Activated CD8-positive, alpha-beta memory T cell treated with anti-CD3 and anti-CD28 coated beads, Interleukin-2, amount 10 ng/mL, durations not matched to agents 7 days and 5 days (primary cell): ENCODE measurements at regions of chr1 and their contacts with region 1.

Region 1: GRCh38 chr1:25037174-25038074 is 107.3 kb upstream of the RUNX3 start:
- DNase-seq: peak; percentile 80
- ATAC-seq: peak; percentile 35
- H3K4me3 Mint-ChIP-seq: no peak overlapping the region
- H3K27ac Mint-ChIP-seq: peak overlapping the region; percentile 35
- H3K4me1 Mint-ChIP-seq: peaks cover 28% of the 10 kb centered on the region
- H3K27me3 Mint-ChIP-seq: peaks cover 11% of the 10 kb centered on the region

Region 2: DNA sequence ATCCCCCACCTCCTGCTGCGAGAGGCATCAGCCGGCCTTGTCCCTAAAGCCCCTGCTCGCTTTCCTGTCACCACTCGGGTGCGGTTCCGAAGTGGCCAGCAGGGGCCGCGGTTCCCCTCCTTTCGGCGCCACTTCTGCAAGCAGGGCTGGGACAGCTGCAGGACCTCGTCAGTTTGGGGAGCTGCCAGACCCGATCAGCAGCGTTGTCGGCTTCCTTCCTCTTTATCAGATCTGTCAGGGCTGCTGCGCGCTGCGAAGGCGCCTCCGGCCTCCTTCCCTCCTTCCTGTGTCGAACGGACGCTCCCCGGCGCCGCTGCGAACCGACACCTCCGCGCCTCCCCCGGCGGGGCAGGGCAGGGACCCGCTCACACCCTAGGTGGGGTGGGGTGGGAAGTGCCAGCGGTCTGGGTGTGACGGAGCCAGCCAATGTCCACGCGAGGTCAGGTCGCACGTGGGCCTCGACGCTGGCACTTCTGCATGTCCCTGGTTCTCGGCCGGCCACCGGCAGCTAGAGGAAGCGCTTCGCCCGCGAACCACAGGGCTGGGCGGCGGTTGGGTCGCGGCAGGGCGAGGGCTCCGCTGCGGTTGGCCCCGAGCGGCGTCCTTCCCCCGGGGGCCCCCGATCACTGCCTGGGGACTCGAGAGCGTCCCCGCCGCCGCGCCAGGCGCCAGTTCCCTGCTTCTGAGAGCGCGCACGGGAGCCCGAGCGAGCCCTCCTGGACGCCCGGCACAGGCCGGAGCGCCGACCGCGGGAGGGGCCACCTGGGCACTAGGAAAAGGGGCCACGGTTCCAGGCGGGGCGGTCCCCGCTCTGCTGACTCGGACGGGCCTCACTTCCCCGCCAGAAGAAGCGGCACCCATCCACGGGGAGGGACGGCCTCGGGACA is 189.2 kb before region 1 on chr1:
- CTCF ChIA-PET with region 1: interaction called, 39 read pairs
- DNase-seq: peak; percentile 96
- ATAC-seq: peak; percentile 98
- H3K4me3 Mint-ChIP-seq: peak overlapping the region; percentile 54
- H3K27ac Mint-ChIP-seq: peak overlapping the region; percentile 66
- H3K4me1 Mint-ChIP-seq: peaks cover 24% of the 10 kb centered on the region
- H3K27me3 Mint-ChIP-seq: peaks cover 56% of the 10 kb centered on the region

Region 3: DNA sequence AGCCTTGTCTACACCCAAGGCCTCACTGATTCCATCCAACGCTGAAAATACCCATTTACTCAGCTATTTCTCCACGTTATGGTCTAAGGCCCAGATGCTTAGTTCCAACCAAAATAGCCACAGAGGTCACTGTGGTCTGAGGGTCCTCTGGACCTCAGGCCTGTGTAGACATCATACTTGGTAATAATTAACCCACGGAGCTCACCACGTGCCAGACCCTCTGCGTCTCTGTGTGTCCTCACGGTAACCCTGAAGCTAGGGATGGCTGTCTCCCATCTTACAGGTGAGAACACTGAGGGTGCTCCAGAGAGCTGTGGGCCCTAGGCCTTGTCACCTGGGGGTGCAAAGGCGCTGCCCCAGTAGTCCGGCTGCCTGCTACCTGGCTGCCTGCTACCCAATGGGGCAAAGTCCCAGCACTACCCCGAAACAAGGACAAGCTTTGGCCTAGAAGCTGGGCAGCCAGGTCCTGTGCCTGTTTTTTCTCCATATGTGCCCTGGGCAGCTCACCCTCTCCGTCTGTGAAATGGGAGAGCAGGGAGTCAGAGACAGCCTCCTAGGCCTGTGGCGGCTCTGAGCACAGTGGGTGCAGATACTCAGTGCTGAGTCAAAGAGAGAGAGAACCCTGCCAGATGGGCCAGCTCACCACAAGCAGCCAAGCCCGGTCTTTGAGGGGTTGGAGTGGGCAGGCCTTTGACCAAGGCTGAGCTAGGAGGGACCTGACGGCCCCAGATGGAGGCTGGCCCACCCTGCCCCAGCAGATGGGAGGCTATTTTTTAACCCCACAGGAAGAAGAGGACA is 90.4 kb before region 1 on chr1:
- CTCF ChIA-PET with region 1: interaction called, 338 read pairs
- DNase-seq: peak; percentile 78
- ATAC-seq: peak; percentile 62
- H3K4me3 Mint-ChIP-seq: peak overlapping the region; percentile 31
- H3K27ac Mint-ChIP-seq: peak overlapping the region; percentile 61
- H3K4me1 Mint-ChIP-seq: peaks cover 92% of the 10 kb centered on the region
- H3K27me3 Mint-ChIP-seq: no peaks in the 10 kb centered on the region

Region 4: GRCh38 chr1:24981631-24982005 is 55.8 kb before region 1 on chr1:
- CTCF ChIA-PET with region 1: interaction called, 21 read pairs
- DNase-seq: no peak
- ATAC-seq: peak; percentile 21
- H3K4me3 Mint-ChIP-seq: peak overlapping the region; percentile 8
- H3K27ac Mint-ChIP-seq: peak overlapping the region; percentile 71
- H3K4me1 Mint-ChIP-seq: peaks cover 86% of the 10 kb centered on the region
- H3K27me3 Mint-ChIP-seq: no peaks in the 10 kb centered on the region

Region 5: DNA sequence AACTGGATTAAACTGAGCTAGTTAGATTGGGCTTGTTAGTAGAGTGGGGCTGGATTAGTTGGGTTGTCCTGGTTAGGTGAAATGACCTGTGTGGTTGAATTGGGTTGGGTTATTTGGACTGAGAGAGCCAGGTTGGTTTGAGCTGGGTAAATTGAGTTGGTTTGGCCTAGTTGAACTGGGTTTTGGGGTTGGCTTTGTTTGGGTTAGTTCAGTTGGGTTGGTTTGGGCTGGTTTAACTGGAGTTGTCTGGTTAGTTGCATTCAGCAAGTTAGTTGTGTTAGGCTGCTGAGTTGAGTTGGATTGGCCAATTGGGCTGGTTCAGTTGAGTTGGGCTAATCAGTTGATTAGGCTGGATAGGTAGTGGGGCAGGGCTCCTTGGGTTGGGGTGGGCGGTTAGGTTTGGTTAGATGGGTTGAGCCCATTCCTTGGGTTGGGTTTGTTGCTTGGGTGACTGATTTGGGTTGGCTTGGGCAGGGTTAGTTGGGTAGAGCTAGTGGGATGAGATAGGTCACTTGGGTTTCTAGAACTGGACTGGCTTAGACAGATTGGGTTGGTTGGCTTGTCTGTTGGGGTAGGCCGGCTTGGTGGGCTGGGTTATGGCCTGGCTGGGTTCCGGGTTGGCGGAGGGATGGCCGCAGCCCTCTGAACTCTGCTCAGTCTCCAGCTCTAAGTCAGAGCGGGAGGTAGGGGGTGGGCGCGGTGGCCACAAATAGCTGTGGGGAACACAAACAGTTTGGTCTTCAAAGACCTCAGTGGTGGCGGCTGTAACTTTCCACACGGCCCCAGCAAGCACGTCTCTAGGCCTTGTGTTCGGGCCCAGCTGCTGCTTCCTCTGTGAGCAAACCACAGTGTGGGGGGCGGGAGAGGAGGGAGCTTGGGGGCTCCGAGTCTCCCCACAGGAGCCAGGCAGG is 40.2 kb before region 1 on chr1:
- CTCF ChIA-PET with region 1: interaction called, 26 read pairs
- DNase-seq: peak; percentile 96
- ATAC-seq: peak; percentile 68
- H3K4me3 Mint-ChIP-seq: peak overlapping the region; percentile 28
- H3K27ac Mint-ChIP-seq: peak overlapping the region; percentile 96
- H3K4me1 Mint-ChIP-seq: peaks cover 92% of the 10 kb centered on the region
- H3K27me3 Mint-ChIP-seq: no peaks in the 10 kb centered on the region

Region 6: DNA sequence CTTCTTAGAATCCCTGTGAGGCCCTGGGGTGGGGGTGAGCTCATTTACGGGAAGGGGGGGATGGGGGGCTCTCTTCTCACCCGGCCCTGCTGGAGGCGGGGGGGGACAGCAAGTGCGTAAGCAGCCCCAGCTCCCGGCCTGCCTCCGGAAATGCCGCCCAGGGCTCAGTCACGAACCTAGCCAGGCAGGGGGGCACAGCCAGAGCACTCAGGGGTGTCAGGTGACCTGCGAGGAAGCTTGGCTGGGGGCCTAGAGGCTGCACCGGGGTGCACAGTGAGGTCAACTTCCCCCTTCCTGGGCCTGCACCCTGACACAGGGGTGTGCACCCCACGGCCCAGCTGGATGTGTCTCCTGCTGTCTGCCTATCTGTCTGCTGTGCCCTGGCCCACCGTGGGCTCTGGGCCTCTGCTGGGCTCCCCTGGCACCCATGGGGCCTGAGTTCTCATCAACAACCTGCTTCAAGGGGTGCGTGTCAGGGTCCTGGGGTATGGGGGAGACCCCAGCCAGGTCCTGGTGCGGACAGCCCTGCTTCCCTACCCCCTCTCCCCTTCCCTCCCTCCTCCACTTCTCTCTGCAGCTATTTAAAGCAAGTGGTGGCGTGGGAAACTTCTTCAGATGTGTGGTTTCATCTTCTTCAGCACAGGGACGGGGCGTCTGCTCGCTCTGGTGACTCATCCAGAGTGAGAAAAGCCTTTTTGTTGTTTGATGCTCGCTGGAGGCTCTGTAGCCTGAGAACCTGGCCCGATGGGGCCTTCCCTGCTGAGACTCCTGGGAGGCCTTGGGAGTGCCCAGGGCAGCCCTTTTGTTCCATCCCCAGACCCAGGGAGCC is 14.8 kb before region 1 on chr1:
- CTCF ChIA-PET with region 1: interaction called, 42 read pairs
- DNase-seq: peak; percentile 99
- ATAC-seq: peak; percentile 90
- H3K4me3 Mint-ChIP-seq: peak overlapping the region; percentile 71
- H3K27ac Mint-ChIP-seq: peak overlapping the region; percentile 97
- H3K4me1 Mint-ChIP-seq: peaks cover 80% of the 10 kb centered on the region
- H3K27me3 Mint-ChIP-seq: no peaks in the 10 kb centered on the region

Region 7: DNA sequence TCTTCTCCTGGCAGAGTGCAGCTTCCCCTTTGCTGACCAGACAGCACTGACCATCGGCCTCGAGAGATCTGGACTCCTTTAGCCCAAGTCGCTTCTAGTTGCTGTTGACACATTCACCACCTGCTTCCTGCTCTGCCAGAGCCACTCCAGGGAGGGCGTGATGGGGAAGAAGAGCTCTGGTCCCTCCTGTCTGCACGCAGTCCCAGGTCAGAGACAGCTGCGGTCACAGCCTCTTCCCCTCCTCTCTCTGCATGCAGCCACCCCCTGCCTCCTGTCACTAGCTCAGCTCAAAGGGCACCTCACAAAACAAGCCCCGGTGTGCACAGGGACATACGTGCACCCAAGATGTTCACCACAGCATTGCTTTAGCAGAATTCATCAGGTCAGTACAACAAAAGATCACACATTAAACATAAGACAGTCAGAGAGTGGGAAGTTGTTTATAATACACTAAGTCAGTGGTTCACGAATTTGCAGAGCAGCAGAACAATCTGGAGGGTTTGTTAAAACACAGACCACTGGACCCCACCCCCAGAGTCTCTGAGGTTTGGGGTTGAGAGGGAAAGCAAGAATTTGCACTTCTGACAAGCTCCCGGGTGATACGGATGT is 62.0 kb after region 1 on chr1:
- CTCF ChIA-PET with region 1: interaction called, 119 read pairs
- DNase-seq: peak; percentile 92
- ATAC-seq: peak; percentile 60
- H3K4me3 Mint-ChIP-seq: peak overlapping the region; percentile 65
- H3K27ac Mint-ChIP-seq: peak overlapping the region; percentile 81
- H3K4me1 Mint-ChIP-seq: peaks cover 73% of the 10 kb centered on the region
- H3K27me3 Mint-ChIP-seq: peaks cover 27% of the 10 kb centered on the region